ENCODE measurements at regions of chr22 and their contacts with region 1.

Region 1: DNA sequence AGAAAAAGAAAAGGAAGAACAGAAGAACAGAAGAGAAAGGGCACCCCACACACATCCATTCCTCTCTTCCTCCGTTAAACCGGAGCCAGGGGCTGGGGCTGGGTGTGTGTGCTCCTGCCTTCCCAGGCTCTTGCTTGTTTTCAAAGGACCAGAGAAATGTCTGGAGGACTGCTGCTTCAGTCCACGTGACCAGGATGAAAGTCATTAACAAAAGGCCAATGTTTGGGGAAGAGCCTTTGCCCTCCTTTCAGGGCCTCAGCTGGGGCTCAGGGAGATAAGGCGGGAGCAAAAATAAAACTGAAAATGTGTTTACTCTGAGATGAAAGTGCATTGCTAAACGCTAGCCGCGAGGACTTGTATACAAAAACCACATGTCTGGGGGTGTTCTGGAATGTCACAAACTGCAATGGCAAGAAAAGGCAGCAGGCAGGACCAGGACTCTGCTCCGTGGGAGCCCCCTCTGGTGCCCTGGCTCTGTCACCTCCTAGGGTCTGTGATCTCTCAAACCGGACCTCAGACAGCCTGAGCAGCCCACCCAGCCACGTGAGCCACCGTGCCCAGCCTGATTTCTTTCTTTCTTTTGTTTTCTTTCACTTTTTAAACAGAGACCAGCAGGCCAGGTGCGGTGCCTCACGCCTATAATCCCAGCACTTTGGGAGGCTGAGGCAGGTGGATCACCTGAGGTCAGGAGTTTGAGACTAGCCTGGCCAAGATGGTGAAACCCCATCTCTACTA is 31.6 kb upstream of the MYH9 start:
- DNase-seq: no peak
- ATAC-seq: peak; percentile 82

Region 2: GRCh38 chr22:36368359-36368983 is 50.9 kb before region 1 on chr22:
- intact Hi-C with region 1: no loop called
- DNase-seq: no peak
- ATAC-seq: peak; percentile 3

Region 3: DNA sequence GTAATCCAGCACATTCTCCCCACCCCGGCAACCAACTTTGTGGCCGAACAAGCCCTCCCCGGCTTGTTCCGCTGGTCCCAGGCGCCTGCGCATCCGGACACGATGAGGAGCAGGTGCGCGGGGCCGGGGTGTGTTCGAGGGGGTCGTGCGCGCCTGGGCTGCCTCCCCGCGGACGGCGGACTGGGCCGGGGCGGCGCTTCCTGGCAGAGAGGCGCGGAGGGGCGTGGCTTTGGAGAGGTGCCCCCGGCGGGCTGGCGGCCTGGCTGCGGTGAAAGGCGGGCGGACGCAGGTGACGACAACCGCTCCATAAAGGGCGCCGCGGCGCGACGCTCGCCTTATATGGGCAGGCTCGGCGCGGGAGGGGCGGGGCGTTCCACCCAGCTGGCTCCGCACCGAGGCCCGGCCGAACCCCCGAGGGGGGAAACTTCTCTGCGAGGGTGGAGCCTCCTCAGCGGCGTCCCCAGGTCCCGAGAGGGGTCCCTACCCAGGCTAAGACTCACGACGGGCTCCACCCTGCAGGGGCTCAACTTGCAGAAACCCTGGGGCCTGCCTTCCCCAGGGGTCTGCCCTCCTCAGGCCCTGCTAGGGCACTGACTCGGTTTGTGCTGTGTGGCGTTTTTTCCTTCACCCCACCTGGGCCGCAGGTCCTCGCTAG is 35.7 kb after region 1 on chr22:
- intact Hi-C with region 1: loop called (anchors 5 kb)
- DNase-seq: peak; percentile 98
- ATAC-seq: peak; percentile 91

Region 4: GRCh38 chr22:36481393-36482168 is 62.2 kb after region 1 on chr22 and contains the start of gene TXN2:
- intact Hi-C with region 1: no loop called
- DNase-seq: peak; percentile 98
- ATAC-seq: peak; percentile 97
- total RNA-seq, gene TXN2: 127 TPM

Measured in Right ventricle myocardium inferior (tissue), 1 donor.